K562 (cell line): ENCODE measurements at regions of chr5 and their contacts with region 1.

Region 1: DNA sequence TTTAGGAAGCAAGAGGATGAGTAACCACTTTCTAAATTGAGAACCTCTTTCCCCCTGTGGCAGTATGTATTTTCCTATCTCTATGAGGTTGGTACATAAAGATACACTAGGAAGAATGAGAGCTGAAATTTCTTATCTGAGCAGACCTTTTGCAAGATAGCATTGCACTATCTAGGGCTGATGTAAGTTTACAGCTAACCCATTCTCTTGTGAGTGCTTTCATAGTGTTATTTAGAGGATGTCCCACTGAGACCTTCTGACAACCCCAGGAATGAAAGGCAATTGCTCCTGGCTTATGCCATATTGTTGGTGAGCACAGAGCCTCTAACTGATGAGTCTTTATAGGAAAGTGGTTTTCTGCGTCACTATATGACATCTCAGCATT is 1209.3 kb upstream of the CDH6 start:
- DNase-seq: peak; percentile 17 to 67 (median 30)
- ATAC-seq: peak; percentile 87
- H3K4me3 ChIP-seq: no peak overlapping the region
- H3K27ac ChIP-seq: peak overlapping the region; percentile 51; the same call in 2 of the 3 replicates
- H3K4me1 ChIP-seq: peaks cover 0 to 11% of the 10 kb centered on the region in 2 experiments; a peak in 1 of 5 replicates
- H3K27me3 ChIP-seq: no peaks in the 10 kb centered on the region
- CTCF ChIP-seq: no peak
- EP300 ChIP-seq: peak; percentile 87
- POLR2A ChIP-seq: no peak
- RAD21 ChIP-seq: no peak

Region 2: DNA sequence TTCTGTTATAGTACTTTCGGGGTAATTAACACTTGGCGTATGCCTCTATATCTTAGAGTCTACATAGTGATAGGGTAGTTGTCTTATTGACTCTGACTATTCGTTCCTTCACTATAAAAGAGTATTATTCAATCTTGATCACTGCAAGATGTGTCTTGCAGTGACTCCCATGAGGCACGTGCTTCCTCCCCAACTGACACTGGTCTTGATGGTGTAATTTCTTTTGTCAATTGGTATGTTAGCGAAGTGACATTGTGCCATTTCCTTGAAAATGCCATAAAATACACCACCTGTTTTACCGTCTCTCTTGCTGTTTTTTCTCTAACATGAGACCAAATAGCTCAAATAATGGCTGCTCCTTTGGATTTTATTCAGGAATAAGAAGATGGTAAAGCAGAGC is 104.7 kb before region 1 on chr5:
- CTCF ChIA-PET with region 1: no interaction called
- POLR2A ChIA-PET with region 1: no interaction called
- in situ Hi-C with region 1: no loop called
- intact Hi-C with region 1: no loop called
- DNase-seq: no peak
- ATAC-seq: no peak
- H3K4me3 ChIP-seq: no peak overlapping the region
- H3K27ac ChIP-seq: no peak overlapping the region
- H3K4me1 ChIP-seq: no peaks in the 10 kb centered on the region
- H3K27me3 ChIP-seq: no peaks in the 10 kb centered on the region
- CTCF ChIP-seq: no peak
- EP300 ChIP-seq: no peak
- POLR2A ChIP-seq: no peak
- RAD21 ChIP-seq: no peak

Region 3: DNA sequence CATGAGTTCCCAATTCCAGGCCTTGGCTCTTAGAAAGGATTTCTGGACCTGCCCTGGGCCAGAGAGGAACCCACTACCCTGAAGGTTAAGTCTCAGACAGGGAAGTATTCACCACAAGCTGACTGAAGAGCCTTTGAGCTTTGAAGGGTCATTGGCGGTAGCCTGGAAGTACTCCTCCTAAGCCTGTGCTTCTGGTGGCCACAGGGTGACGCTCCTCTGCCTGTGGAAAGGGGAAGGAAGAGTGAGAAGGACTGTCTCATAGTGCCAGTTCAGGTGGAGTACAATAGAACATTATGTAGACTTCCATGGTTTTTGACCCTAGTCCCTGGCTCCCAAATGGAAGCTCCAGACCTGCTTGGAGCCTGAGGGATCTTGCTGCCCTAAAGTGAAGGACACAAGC is 23.8 kb before region 1 on chr5:
- CTCF ChIA-PET with region 1: no interaction called
- POLR2A ChIA-PET with region 1: no interaction called
- in situ Hi-C with region 1: no loop called
- intact Hi-C with region 1: loop called (anchors 2 kb)
- DNase-seq: no peak
- ATAC-seq: peak; percentile 83
- H3K4me3 ChIP-seq: no peak overlapping the region
- H3K27ac ChIP-seq: no peak overlapping the region
- H3K4me1 ChIP-seq: no peaks in the 10 kb centered on the region
- H3K27me3 ChIP-seq: no peaks in the 10 kb centered on the region
- CTCF ChIP-seq: peak in 1 of 3 experiments; percentile 29; a peak in 1 of 6 replicates
- EP300 ChIP-seq: no peak
- POLR2A ChIP-seq: no peak
- RAD21 ChIP-seq: peak in 1 of 2 experiments; percentile 36; a peak in 2 of 4 replicates

Region 4: DNA sequence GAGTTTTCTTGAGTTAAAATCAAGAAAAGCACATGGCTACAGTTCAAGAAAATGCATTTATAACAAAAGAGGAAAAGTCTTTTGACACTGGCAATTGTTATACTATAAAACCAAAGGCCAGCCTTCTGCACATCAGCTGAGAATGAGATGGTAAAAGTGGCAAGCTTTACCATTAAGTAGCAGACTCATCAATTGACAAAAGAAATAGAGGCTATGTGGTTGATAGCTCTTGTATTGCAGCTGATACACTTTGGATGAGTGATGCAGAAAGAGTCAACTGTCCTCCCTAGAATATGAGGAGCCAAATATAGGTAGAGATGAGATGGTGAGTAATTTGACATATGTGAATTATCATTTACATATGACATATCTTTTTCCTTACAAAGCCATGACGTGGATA is 108.4 kb after region 1 on chr5:
- CTCF ChIA-PET with region 1: no interaction called
- POLR2A ChIA-PET with region 1: no interaction called
- in situ Hi-C with region 1: no loop called
- intact Hi-C with region 1: no loop called
- DNase-seq: no peak
- ATAC-seq: no peak
- H3K4me3 ChIP-seq: no peak overlapping the region
- H3K27ac ChIP-seq: no peak overlapping the region
- H3K4me1 ChIP-seq: no peaks in the 10 kb centered on the region
- H3K27me3 ChIP-seq: no peaks in the 10 kb centered on the region
- CTCF ChIP-seq: no peak
- EP300 ChIP-seq: no peak
- POLR2A ChIP-seq: no peak
- RAD21 ChIP-seq: no peak